PC-3 (cell line): ENCODE measurements at regions of chr2 and their contacts with region 1.

Region 1: GRCh38 chr2:204645018-204645773 is 99.9 kb downstream of the PARD3B start:
- DNase-seq: peak; percentile 85
- ATAC-seq: peak; percentile 98
- H3K4me3 ChIP-seq: no peak overlapping the region
- H3K27ac ChIP-seq: peak overlapping the region; percentile 71
- H3K4me1 ChIP-seq: peaks cover 28% of the 10 kb centered on the region
- H3K27me3 ChIP-seq: no peaks in the 10 kb centered on the region
- CTCF ChIP-seq: no peak

Region 2: GRCh38 chr2:204452464-204453023 is 192.7 kb before region 1 on chr2:
- CTCF ChIA-PET with region 1: no interaction called
- POLR2A ChIA-PET with region 1: no interaction called
- intact Hi-C with region 1: loop called (anchors 10 kb)
- DNase-seq: peak; percentile 96
- ATAC-seq: peak; percentile 97
- H3K4me3 ChIP-seq: peak overlapping the region; percentile 5; the same call in 1 of the 2 replicates
- H3K27ac ChIP-seq: peak overlapping the region; percentile 81
- H3K4me1 ChIP-seq: peaks cover 22% of the 10 kb centered on the region
- H3K27me3 ChIP-seq: no peaks in the 10 kb centered on the region
- CTCF ChIP-seq: no peak

Region 3: GRCh38 chr2:204545023-204545860 is 100.0 kb before region 1 on chr2 and contains the start of gene PARD3B:
- CTCF ChIA-PET with region 1: no interaction called
- POLR2A ChIA-PET with region 1: no interaction called
- intact Hi-C with region 1: loop called (anchors 1 kb)
- DNase-seq: peak; percentile 74
- ATAC-seq: peak; percentile 84
- H3K4me3 ChIP-seq: peak within 1 kb of the TSS; percentile 80
- H3K27ac ChIP-seq: peak within 1 kb of the TSS; percentile 49
- H3K4me1 ChIP-seq: peaks cover 20% of the 10 kb centered on the region
- H3K27me3 ChIP-seq: no peaks in the 10 kb centered on the region
- CTCF ChIP-seq: no peak
- total RNA-seq, gene PARD3B: 3.9 and 10.9 TPM in 2 replicates

Region 4: GRCh38 chr2:204611017-204611631 is 34.1 kb before region 1 on chr2:
- CTCF ChIA-PET with region 1: no interaction called
- POLR2A ChIA-PET with region 1: no interaction called
- intact Hi-C with region 1: no loop called
- DNase-seq: no peak
- ATAC-seq: no peak
- H3K4me3 ChIP-seq: no peak overlapping the region
- H3K27ac ChIP-seq: no peak overlapping the region
- H3K4me1 ChIP-seq: no peaks in the 10 kb centered on the region
- H3K27me3 ChIP-seq: no peaks in the 10 kb centered on the region
- CTCF ChIP-seq: no peak

Region 5: GRCh38 chr2:204664708-204665121 is 19.5 kb after region 1 on chr2:
- CTCF ChIA-PET with region 1: no interaction called
- POLR2A ChIA-PET with region 1: no interaction called
- intact Hi-C with region 1: loop called (anchors 1 kb)
- DNase-seq: peak; percentile 67
- ATAC-seq: peak; percentile 89
- H3K4me3 ChIP-seq: peak overlapping the region; percentile 4; the same call in 1 of the 2 replicates
- H3K27ac ChIP-seq: peak overlapping the region; percentile 1; the same call in 1 of the 2 replicates
- H3K4me1 ChIP-seq: peaks cover 27% of the 10 kb centered on the region
- H3K27me3 ChIP-seq: no peaks in the 10 kb centered on the region
- CTCF ChIP-seq: no peak

Region 6: GRCh38 chr2:204913854-204914464 is 268.8 kb after region 1 on chr2:
- CTCF ChIA-PET with region 1: no interaction called
- POLR2A ChIA-PET with region 1: no interaction called
- intact Hi-C with region 1: no loop called
- DNase-seq: no peak
- ATAC-seq: no peak
- H3K4me3 ChIP-seq: no peak overlapping the region
- H3K27ac ChIP-seq: no peak overlapping the region
- H3K4me1 ChIP-seq: no peaks in the 10 kb centered on the region
- H3K27me3 ChIP-seq: no peaks in the 10 kb centered on the region
- CTCF ChIP-seq: no peak

Region 7: GRCh38 chr2:205119136-205119535 is 473.9 kb after region 1 on chr2:
- CTCF ChIA-PET with region 1: no interaction called
- POLR2A ChIA-PET with region 1: no interaction called
- intact Hi-C with region 1: no loop called
- DNase-seq: no peak
- ATAC-seq: no peak
- H3K4me3 ChIP-seq: no peak overlapping the region
- H3K27ac ChIP-seq: no peak overlapping the region
- H3K4me1 ChIP-seq: no peaks in the 10 kb centered on the region
- H3K27me3 ChIP-seq: no peaks in the 10 kb centered on the region
- CTCF ChIP-seq: no peak